ENCODE measurements at regions of chr7 and their contacts with region 1.

Region 1: DNA sequence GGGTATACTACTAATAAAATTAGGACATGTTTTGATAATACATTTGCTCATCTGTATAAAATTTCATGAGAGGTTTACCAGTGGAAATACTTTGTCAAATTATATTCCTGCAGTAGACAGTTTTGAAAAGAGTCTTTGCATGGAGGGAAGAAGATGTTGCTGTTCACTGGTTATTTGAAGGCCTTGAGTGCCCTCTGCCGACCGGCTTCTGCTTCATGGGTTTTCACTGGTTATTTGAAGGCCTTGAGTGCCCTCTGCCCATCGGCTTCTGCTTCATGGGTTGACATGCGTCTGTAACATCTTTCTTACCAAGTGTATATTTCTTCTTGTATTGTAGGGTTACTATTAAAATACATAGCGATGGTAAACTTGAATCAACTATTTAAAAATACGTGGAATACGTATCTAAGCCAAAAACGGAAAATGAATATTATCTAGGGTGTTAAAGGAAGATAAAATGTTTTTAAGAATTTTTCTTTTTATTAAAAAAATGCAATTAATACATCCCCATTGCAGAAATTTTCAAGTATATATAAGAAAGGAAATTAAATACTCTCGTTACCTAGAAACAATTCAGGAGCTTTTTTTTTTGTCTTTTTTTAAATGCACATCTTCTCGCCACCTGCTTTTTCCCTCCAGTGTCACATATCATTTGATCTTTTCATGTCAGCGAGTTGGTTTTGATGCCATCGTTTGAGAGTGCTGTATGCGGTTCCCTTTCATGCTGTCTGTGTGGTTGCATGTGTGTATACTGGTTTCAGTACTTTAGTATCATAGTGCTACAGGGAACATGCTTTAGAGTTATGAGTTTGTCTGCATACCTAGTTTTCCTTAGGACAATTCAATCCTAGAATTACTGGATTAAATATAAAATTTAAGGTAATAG is 73.4 kb downstream of the SHH start:
- DNase-seq: peak; percentile 75 to 80 (median 75)
- ATAC-seq: peak; percentile 91 to 93 (median 92)
- H3K4me3 ChIP-seq: no peak overlapping the region
- H3K27ac ChIP-seq: no peak overlapping the region
- H3K4me1 ChIP-seq: peaks cover 0 to 9% (median 0%) of the 10 kb centered on the region in 4 donors
- H3K27me3 ChIP-seq: no peaks in the 10 kb centered on the region
- CTCF ChIP-seq: peak; percentile 72 to 86 (median 78)
- POLR2A ChIP-seq: no peak

Region 2: GRCh38 chr7:155603205-155603857 is 135.6 kb before region 1 on chr7:
- intact Hi-C with region 1: loop called in 1 of 2 experiments (anchors 10 kb)
- DNase-seq: no peak
- ATAC-seq: no peak
- H3K4me3 ChIP-seq: no peak overlapping the region
- H3K27ac ChIP-seq: no peak overlapping the region
- H3K4me1 ChIP-seq: peaks cover 0 to 7% (median 3%) of the 10 kb centered on the region in 4 donors
- H3K27me3 ChIP-seq: no peaks in the 10 kb centered on the region
- CTCF ChIP-seq: no peak
- POLR2A ChIP-seq: no peak

Measured in right lobe of liver (tissue), 6 donors.